Endothelial cell of umbilical vein (primary cell): ENCODE measurements at regions of chr2 and their contacts with region 1.

Region 1: DNA sequence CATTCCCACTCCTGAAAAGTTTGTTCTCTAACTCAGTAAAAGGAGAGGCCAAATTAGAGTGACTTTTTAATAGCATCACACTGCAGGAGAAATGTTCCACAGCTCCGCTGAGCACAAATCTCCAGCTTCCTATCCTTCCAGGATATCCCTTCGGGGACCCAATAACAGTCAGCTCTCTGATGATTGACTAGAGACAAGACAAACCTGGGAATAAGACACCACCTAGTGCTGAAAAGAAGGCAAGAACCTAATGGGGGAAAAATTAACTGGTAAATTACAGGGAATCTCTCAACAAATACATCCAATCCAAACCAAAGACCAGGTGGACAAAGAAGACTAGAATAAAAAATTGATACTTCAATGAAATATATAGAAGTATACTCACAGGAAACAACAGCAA is 977.1 kb upstream of the SOX11 start:
- DNase-seq: peak; percentile 52
- H3K4me3 ChIP-seq: no peak overlapping the region
- H3K27ac ChIP-seq: no peak overlapping the region
- H3K4me1 ChIP-seq: no peaks in the 10 kb centered on the region
- H3K27me3 ChIP-seq: no peaks in the 10 kb centered on the region
- CTCF ChIP-seq: peak; percentile 33 to 34
- POLR2A ChIP-seq: no peak

Region 2: GRCh38 chr2:3728104-3729054 is 986.7 kb before region 1 on chr2:
- CTCF ChIA-PET with region 1: interaction called, 49 read pairs
- POLR2A ChIA-PET with region 1: no interaction called
- dilution Hi-C with region 1: no loop called
- intact Hi-C with region 1: no loop called
- DNase-seq: peak; percentile 61
- H3K4me3 ChIP-seq: no peak overlapping the region
- H3K27ac ChIP-seq: no peak overlapping the region
- H3K4me1 ChIP-seq: peaks cover 4% of the 10 kb centered on the region
- H3K27me3 ChIP-seq: no peaks in the 10 kb centered on the region
- CTCF ChIP-seq: peak; percentile 34 to 58
- POLR2A ChIP-seq: no peak

Region 3: GRCh38 chr2:3959372-3959771 is 755.7 kb before region 1 on chr2:
- CTCF ChIA-PET with region 1: interaction called, 188 read pairs
- POLR2A ChIA-PET with region 1: no interaction called
- dilution Hi-C with region 1: no loop called
- intact Hi-C with region 1: loop called (anchors 1 kb)
- DNase-seq: peak; percentile 29
- H3K4me3 ChIP-seq: no peak overlapping the region
- H3K27ac ChIP-seq: no peak overlapping the region
- H3K4me1 ChIP-seq: no peaks in the 10 kb centered on the region
- H3K27me3 ChIP-seq: no peaks in the 10 kb centered on the region
- CTCF ChIP-seq: peak; percentile 56 to 62
- POLR2A ChIP-seq: no peak

Region 4: DNA sequence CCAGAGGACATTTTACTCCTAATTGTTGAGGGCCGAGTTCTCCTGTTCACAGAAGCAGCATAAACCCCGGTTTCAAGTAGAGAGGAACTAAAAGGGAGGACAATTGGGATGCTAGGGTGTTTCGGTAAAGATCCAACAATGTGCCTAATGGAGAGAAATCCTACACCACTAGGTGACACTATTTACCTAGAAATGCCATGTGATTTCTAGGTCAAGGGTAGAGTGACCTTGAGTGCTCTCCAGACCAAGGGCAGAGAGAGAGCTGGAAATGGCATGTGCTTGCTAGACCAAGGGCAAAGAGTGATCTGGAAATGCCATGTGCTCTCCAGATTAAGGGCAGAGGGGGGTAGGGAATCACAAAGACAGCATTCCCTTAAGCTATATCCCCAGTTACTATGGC is 539.7 kb before region 1 on chr2:
- CTCF ChIA-PET with region 1: interaction called, 5 read pairs
- POLR2A ChIA-PET with region 1: no interaction called
- dilution Hi-C with region 1: no loop called
- intact Hi-C with region 1: loop called (anchors 1 kb)
- DNase-seq: no peak
- H3K4me3 ChIP-seq: no peak overlapping the region
- H3K27ac ChIP-seq: no peak overlapping the region
- H3K4me1 ChIP-seq: no peaks in the 10 kb centered on the region
- H3K27me3 ChIP-seq: no peaks in the 10 kb centered on the region
- CTCF ChIP-seq: no peak
- POLR2A ChIP-seq: no peak

Region 5: DNA sequence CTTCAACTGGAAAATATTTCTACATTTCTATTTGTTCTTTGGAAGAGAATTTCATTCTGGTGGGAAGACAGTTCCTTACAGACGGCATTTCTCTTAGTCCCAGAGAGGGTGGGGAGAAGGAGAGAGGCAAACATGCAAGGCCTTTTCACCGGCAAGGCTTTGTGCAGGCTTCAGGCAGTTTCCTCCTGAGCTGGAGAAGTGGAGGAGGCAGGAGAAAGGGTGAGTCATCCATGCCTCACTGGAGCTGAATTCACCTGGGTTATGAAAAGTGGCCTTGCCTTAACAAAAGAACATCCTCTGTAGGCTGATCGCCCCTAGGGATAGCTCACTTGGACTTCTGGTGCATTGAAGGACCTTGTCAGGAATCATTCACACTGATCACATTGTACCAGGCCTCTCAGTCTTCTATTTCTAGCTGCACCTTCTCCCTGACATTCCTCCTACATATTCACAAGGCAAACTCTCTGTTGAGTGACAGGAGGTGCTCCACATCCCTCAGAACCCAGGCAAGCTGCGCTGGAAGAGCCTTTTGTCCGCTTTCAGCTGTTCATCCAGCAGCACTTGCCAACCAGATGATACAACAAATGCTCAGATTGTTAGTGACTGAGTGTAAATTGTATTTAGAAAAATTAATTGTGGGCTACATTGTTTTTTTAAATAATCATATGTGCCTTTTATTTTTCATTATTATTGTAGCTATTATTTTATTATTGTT is 215.6 kb before region 1 on chr2:
- CTCF ChIA-PET with region 1: interaction called, 14 read pairs
- POLR2A ChIA-PET with region 1: no interaction called
- dilution Hi-C with region 1: no loop called
- intact Hi-C with region 1: loop called (anchors 2 kb)
- DNase-seq: peak; percentile 50
- H3K4me3 ChIP-seq: no peak overlapping the region
- H3K27ac ChIP-seq: peak overlapping the region; percentile 31
- H3K4me1 ChIP-seq: peaks cover 27% of the 10 kb centered on the region
- H3K27me3 ChIP-seq: no peaks in the 10 kb centered on the region
- CTCF ChIP-seq: no peak
- POLR2A ChIP-seq: no peak

Region 6: GRCh38 chr2:4662161-4662779 is 52.8 kb before region 1 on chr2:
- CTCF ChIA-PET with region 1: interaction called, 3 read pairs
- POLR2A ChIA-PET with region 1: no interaction called
- dilution Hi-C with region 1: no loop called
- intact Hi-C with region 1: loop called (anchors 2 kb)
- DNase-seq: peak; percentile 88
- H3K4me3 ChIP-seq: no peak overlapping the region
- H3K27ac ChIP-seq: peak overlapping the region; percentile 91
- H3K4me1 ChIP-seq: peaks cover 18% of the 10 kb centered on the region
- H3K27me3 ChIP-seq: no peaks in the 10 kb centered on the region
- CTCF ChIP-seq: no peak
- POLR2A ChIP-seq: no peak

Region 7: DNA sequence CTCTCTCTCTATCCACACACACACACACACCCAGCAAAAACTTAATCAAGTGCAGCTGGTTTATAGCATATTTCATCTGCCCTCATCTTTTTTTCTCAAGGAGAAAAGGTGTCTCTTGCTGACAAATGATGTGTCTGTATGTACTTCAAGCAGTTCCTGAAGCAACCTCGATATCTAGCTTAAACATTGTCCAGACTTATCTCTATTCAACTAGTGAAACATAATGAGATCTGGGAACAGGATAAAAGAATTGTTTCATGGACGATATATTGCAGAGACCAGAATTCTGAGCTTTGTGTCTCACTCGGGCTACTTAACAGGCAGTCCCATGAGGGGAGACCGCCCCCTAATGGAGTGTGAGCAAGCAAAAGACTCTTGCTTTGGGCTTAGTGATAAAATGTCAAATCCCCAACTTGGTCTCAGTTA is 47.9 kb after region 1 on chr2:
- CTCF ChIA-PET with region 1: interaction called, 11 read pairs
- POLR2A ChIA-PET with region 1: no interaction called
- dilution Hi-C with region 1: no loop called
- intact Hi-C with region 1: no loop called
- DNase-seq: peak; percentile 58
- H3K4me3 ChIP-seq: no peak overlapping the region
- H3K27ac ChIP-seq: no peak overlapping the region
- H3K4me1 ChIP-seq: no peaks in the 10 kb centered on the region
- H3K27me3 ChIP-seq: no peaks in the 10 kb centered on the region
- CTCF ChIP-seq: peak; percentile 56
- POLR2A ChIP-seq: no peak

Region 8: DNA sequence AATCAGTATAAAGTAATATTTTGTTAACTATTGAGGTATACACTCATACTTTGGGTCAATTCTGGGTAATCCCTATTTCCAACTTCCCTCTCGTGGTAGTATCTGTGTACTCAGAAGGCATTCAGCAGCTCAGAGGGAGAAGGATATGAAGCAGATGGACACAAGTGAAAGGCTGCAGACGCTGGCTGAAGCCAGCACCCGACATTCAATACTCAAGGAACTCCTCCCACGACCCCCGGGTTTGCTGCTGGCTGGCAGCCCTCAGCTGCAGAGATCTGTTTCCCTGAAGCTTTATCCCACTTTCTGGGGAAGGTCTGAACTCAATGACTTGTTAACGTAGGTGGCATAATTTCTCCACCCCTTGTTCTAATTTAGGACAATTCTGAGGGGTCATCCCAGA is 129.8 kb after region 1 on chr2:
- CTCF ChIA-PET with region 1: no interaction called
- POLR2A ChIA-PET with region 1: no interaction called
- dilution Hi-C with region 1: no loop called
- intact Hi-C with region 1: no loop called
- DNase-seq: no peak
- H3K4me3 ChIP-seq: no peak overlapping the region
- H3K27ac ChIP-seq: no peak overlapping the region
- H3K4me1 ChIP-seq: no peaks in the 10 kb centered on the region
- H3K27me3 ChIP-seq: no peaks in the 10 kb centered on the region
- CTCF ChIP-seq: no peak
- POLR2A ChIP-seq: no peak